Activated CD8-positive, alpha-beta memory T cell treated with anti-CD3 and anti-CD28 coated beads, Interleukin-2, amount 10 ng/mL, durations not matched to agents 7 days and 5 days (primary cell): ENCODE measurements at regions of chr5 and their contacts with region 1.

Region 1: GRCh38 chr5:111530298-111530740 is 18.0 kb upstream of the STARD4 start:
- DNase-seq: peak; percentile 90
- ATAC-seq: peak; percentile 100
- H3K4me3 Mint-ChIP-seq: peak overlapping the region; percentile 60
- H3K27ac Mint-ChIP-seq: peak overlapping the region; percentile 91
- H3K4me1 Mint-ChIP-seq: peaks cover 18% of the 10 kb centered on the region
- H3K27me3 Mint-ChIP-seq: peaks cover 2% of the 10 kb centered on the region

Region 2: GRCh38 chr5:111158105-111158744 is 372.1 kb before region 1 on chr5:
- CTCF ChIA-PET with region 1: interaction called, 11 read pairs
- DNase-seq: peak; percentile 85
- ATAC-seq: peak; percentile 75
- H3K4me3 Mint-ChIP-seq: no peak overlapping the region
- H3K27ac Mint-ChIP-seq: no peak overlapping the region
- H3K4me1 Mint-ChIP-seq: peaks cover 4% of the 10 kb centered on the region
- H3K27me3 Mint-ChIP-seq: peaks cover 3% of the 10 kb centered on the region